HEK293 (cell line): ENCODE measurements at regions of chr9 and their contacts with region 1.

Region 1: GRCh38 chr9:15231788-15232635 is 75.0 kb downstream of the TTC39B start:
- H3K4me3 ChIP-seq: no peak overlapping the region
- H3K27ac ChIP-seq: no peak overlapping the region
- H3K4me1 ChIP-seq: no peaks in the 10 kb centered on the region
- CTCF ChIP-seq: no peak

Region 2: GRCh38 chr9:15191378-15191777 is 40.6 kb before region 1 on chr9:
- CTCF ChIA-PET with region 1: no interaction called
- POLR2A ChIA-PET with region 1: no interaction called
- H3K4me3 ChIP-seq: no peak overlapping the region
- H3K27ac ChIP-seq: no peak overlapping the region
- H3K4me1 ChIP-seq: no peaks in the 10 kb centered on the region
- CTCF ChIP-seq: no peak

Region 3: DNA sequence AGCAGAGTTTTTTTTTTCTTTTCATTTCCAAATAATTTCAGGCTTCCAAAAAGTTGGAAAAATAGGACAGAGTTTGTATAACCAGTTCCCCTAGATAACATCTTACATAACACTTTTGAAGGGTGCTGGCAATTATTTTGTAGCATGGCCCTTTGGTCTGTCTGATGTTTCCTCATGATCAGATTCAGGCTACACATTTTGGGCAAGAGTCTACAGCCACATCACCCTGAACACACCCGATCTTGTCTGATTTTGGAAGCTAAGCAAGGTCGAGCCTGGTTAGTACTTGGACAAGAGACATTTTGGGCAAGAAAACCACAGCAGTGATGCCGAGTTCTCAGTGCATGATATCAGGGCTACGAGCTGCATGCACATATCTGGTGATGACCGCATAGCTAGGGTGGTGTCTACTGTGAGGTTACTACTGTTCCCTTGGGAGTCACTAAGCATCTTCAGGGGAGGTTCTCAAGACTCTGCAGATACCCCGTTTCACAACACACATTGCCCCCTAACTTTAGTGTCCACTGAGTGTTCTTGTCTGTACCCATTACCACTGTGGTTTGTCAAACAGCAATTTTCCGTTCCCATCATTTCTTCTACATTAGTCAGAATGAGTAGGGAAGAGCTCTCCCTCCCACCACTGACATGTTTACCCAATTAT is 11.2 kb before region 1 on chr9:
- CTCF ChIA-PET with region 1: interaction called, 20 read pairs
- POLR2A ChIA-PET with region 1: no interaction called
- H3K4me3 ChIP-seq: no peak overlapping the region
- H3K27ac ChIP-seq: no peak overlapping the region
- H3K4me1 ChIP-seq: no peaks in the 10 kb centered on the region
- CTCF ChIP-seq: no peak

Region 4: GRCh38 chr9:15430920-15431844 is 199.2 kb after region 1 on chr9:
- CTCF ChIA-PET with region 1: no interaction called
- POLR2A ChIA-PET with region 1: no interaction called
- H3K4me3 ChIP-seq: no peak overlapping the region
- H3K27ac ChIP-seq: no peak overlapping the region
- H3K4me1 ChIP-seq: peaks cover 6% of the 10 kb centered on the region; the same call in 1 of the 2 replicates
- CTCF ChIP-seq: no peak